ENCODE measurements at regions of chr6 and their contacts with region 1.

Region 1: GRCh38 chr6:115071962-115072361 is 729.1 kb upstream of the HS3ST5 start:
- DNase-seq: no peak
- H3K4me3 ChIP-seq: no peak overlapping the region
- CTCF ChIP-seq: no peak
- POLR2A ChIP-seq: no peak

Region 2: GRCh38 chr6:114747987-114748630 is 323.9 kb before region 1 on chr6:
- intact Hi-C with region 1: no loop called
- DNase-seq: peak in 1 of 2 donors; percentile 16
- H3K4me3 ChIP-seq: no peak overlapping the region
- CTCF ChIP-seq: no peak
- POLR2A ChIP-seq: no peak

Region 3: DNA sequence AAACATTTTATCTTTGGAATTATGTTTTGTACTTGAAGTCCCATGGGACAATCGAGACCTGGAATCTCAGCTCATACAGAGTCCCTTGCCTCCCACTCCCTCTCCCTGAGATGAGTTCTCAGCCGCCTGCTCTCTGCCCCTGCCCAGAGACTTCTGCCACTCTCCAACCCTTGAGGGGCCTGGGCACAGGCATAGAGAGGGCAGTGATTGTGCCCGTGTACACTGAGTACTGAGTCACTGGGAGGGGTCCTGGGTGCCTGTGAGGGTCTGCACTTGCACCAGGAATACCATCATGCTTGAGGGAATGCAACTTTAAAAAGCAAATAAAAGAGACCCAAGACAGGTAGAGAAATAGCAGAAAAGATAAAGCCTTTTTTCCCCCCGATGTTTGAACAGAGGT is 275.4 kb before region 1 on chr6:
- intact Hi-C with region 1: no loop called
- DNase-seq: no peak
- H3K4me3 ChIP-seq: no peak overlapping the region
- CTCF ChIP-seq: no peak
- POLR2A ChIP-seq: no peak

Region 4: GRCh38 chr6:114810468-114810867 is 261.5 kb before region 1 on chr6:
- intact Hi-C with region 1: no loop called
- DNase-seq: no peak
- H3K4me3 ChIP-seq: no peak overlapping the region
- CTCF ChIP-seq: no peak
- POLR2A ChIP-seq: no peak

Region 5: DNA sequence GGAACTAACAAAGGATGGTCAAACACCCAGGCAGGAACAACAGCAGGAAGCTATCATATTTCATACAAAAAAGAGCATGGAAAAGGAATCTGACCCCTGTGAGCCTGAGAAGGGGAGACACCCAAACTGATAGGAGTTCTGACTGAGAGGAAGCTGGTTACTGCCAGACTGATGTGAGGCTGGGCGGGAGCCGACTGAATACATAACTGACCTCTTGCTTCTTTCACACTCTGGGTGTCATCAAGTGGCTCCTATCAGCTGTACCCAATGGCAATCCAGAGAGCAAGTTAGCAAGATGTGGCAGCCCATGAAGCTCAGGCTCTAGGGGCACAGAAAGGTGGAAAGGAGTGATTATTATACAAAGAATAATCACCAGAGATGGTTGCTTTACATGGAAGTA is 65.9 kb after region 1 on chr6:
- intact Hi-C with region 1: no loop called
- DNase-seq: no peak
- H3K4me3 ChIP-seq: no peak overlapping the region
- CTCF ChIP-seq: no peak
- POLR2A ChIP-seq: no peak

Region 6: DNA sequence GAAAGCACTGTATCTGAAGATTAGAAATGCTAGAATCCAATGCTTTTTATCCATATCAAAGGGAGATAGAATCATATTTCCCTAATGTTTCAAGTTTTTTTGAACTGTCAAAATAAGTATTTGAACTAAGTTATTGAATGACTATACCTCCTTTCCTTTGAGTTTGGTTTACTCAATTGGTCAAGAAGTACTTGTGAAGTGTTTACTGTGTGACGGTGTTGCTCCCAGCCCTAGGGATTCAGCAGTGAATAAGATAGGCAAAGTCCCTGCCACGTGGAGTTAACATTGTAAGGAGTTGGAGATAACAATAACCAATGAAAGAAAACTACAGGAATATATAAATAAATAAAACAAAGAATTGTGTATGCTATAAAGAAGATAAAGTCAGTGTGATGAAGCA is 452.9 kb after region 1 on chr6:
- intact Hi-C with region 1: loop called (anchors 5 kb)
- DNase-seq: no peak
- H3K4me3 ChIP-seq: no peak overlapping the region
- CTCF ChIP-seq: no peak
- POLR2A ChIP-seq: no peak